Lower leg skin (tissue), 4 donors: ENCODE measurements at regions of chr9 and their contacts with region 1.

Region 1: DNA sequence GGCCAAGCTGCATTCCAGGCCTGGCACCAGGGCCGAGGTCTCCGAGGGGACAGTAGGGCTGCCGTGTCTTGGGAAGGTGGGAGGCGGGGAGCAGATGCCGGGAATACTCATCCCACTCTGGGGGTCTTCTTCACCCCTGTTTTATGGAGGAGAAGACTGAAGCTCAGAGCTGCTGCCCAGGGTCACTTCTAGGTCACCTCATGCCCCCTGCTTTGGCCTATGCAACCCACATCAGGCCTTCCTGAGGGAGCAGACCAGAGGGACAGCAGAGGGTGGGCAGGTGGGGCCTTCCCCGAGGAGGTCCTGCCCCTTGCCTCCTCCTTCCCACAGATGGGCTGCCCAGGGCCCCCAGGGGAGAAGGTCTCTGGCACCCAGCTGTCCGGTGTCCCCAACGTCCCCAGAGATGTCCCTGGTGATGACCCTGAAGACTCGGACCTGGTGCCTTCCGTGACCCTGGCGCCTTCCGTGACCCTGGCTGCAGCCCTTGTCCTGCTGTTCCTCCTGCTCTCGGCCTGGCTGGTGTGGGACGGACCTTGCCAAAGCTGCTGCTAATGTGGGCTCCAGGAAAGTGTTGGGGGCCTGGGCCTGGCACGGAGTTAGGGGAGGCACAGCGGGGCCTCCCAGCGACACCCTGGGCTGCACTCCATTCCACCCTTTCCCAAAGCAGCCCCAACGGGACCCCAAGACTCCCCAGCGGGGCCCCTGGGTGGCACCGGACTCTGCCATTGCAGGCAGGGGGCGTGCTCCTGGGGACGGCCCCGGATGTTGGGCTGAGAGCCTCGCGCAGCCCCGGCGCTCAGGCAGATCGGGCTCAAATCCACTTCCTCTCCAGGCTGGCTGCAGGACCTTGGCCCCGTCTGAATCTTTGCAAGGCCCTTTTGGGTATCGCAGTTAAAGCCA is 6.7 kb upstream of the SLC2A6 start:
- DNase-seq: no peak
- H3K4me3 ChIP-seq: no peak overlapping the region
- CTCF ChIP-seq: no peak
- POLR2A ChIP-seq: no peak

Region 2: DNA sequence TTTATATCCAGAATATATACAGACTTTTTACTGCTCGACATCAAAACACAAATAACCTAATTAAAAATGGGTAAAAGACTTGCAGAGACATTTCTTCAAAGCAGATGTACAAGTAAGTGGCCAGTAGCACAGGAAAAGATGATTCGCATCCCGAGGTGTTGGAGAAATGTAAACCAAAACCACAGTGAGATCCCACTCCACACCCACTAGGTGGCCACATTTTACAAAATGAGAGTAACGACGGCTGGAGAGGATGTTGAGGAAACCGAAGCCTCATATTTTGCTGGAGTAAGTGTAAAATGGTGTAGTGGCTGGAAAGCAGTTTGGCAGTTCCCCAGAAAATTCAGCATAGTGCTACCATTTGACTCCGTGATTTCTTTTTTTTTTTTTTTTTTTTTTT is 300.6 kb before region 1 on chr9:
- intact Hi-C with region 1: loop called (anchors 5 kb)
- DNase-seq: peak in 1 of 2 donors; percentile 35
- H3K4me3 ChIP-seq: no peak overlapping the region
- CTCF ChIP-seq: no peak
- POLR2A ChIP-seq: no peak

Region 3: DNA sequence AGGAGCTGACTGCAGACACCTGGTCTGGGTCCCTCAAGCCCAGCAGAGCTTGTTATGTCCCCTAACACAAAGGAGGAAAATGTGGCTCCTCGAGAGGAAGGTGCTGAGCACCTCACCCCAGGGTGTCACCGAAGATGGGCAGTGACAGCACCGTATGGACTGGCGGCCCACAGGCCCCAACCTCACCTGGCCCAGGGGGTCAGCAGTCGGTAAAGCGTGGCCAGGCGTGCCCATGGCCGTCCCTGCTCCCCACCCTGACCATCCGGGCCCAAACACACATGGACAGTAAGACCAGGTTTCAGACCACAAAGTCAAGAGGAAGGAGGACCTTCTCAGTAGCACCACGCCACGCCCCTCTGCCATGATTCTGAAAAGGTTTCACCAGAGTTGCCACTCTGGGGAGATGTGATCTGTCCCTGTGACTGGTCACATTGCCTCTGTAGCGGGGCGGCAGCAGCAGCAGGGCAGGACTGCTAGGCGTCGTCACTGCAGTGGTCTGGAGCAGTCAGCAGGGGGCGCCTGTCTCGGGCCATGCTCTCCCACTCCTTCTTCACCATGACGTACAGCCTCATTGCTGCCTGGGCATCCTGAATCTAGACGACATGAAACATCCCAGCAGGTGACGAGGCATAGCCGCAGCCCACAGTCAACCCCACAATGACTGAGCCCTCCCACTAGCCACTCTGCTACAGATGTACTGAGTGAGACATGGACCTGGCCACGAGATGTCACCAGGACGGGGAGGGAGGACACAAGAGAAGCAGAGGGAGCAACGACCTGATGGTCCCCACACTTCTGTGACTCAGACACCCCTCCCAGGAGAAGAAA is 78.9 kb before region 1 on chr9:
- intact Hi-C with region 1: loop called (anchors 5 kb)
- DNase-seq: peak; percentile 40 to 92
- H3K4me3 ChIP-seq: no peak overlapping the region
- CTCF ChIP-seq: peak in 1 of 3 donors; percentile 89
- POLR2A ChIP-seq: no peak

Region 4: DNA sequence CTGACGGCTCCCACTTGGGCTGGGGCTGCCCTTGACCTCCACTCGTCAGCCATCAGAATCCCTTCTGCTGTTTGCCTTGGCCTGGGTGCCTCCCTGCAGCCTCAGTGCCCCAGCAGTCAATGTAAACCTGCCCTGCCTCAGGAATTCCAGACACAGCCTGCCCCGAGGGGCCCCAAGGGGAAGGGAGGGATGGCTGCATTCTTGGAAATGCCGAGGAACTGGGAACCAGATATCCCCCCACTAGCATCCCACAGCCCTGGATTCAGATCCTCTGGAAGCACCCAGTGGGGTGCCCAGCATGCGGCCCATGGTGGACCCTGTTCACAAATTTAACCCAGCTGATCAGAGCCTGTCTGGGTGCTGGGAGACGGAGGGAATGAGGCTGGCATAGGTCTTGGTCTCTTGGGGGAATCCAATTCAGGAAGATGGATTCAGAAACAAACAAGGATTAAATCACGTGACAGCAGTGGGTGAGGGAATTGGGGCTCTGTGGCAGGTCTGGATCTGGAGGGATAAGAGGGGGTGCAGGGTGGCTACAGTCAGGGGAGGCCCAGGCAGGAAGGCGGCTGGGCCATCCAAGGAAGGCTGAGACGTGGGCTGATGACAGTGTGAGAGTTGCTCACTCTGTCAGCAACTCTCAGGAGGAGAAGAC is 1090.0 kb after region 1 on chr9:
- intact Hi-C with region 1: no loop called
- DNase-seq: peak in 1 of 2 donors; percentile 57
- H3K4me3 ChIP-seq: no peak overlapping the region
- CTCF ChIP-seq: no peak
- POLR2A ChIP-seq: no peak

Region 5: DNA sequence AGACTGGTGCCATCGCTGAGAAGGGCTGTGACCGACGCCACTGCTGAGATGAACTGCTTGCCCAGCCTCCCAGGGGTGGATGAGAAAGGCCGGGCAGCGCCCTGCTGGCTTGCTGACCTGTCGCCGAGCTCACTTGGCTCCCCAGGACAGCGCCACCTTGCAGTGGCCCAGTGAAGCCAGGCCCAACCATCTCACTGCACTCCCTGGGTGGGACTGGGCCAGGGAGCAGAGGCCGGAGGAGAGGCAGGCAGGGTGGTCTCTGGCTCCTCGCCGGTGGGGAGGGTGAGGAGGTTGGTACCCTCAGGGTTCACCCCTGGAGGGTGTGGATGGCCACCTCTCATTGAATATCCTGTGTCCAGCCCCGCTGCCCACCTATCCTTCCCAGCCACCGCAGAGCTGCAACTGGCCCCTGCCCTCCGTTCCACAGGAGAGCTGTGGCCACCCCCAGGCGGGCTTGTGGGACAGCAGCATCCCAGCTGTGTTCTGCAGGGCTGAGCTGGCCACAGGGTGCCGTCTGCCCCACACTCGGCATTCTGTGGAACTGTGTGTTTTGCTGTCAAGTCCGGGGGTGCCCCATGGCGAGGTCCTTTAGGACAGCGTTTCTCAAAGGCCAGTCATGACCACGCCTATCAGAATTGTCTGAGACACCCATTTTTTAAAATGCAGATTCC is 1354.0 kb after region 1 on chr9:
- intact Hi-C with region 1: no loop called
- DNase-seq: no peak
- H3K4me3 ChIP-seq: no peak overlapping the region
- CTCF ChIP-seq: no peak
- POLR2A ChIP-seq: no peak

Region 6: DNA sequence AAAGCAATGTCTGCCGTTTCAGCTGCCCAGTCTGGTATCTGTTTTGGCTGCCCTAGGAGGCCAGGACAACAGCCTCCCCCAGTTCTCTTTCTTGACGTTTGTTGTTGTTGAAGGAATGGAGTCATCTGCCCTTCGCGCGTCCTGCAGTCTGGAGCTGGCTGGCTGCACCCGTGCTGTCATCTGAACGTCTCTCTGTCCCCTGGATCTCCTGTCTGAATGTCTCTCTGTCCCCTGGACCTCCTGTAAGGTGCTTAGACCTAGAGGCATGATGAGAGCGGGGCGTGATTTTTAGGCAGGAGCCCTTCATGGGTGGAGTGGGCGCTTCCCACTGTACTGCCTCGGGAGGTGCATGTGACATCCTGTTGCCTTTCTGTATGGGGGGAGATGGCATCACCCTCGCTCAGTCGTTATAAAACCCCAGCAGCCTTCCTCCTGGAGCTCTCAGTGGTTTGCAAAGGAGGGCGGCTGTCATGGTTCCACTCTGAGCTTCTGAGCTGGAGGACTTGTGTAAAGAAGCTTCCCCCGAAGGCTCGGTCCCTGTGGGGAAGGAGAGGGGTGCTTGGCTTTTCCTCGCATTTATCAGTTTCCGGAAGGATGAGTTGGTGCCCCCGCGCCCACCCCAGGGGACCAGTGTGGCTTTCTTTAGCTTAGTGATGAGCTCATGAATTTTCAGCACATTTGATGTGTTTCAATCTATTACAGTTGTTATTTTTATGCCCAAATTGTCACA is 1552.1 kb after region 1 on chr9:
- intact Hi-C with region 1: no loop called
- DNase-seq: peak in 1 of 2 donors; percentile 77
- H3K4me3 ChIP-seq: no peak overlapping the region
- CTCF ChIP-seq: no peak
- POLR2A ChIP-seq: no peak